ENCODE measurements at regions of chr1 and their contacts with region 1.

Region 1: GRCh38 chr1:174189428-174190062 is 30.2 kb downstream of the RABGAP1L start:
- DNase-seq: no peak
- H3K4me3 ChIP-seq: no peak overlapping the region
- H3K27ac ChIP-seq: no peak overlapping the region
- H3K4me1 ChIP-seq: peaks cover 0 to 3% (median 0%) of the 10 kb centered on the region in 4 donors
- H3K27me3 ChIP-seq: no peaks in the 10 kb centered on the region
- CTCF ChIP-seq: no peak

Region 2: GRCh38 chr1:174077749-174078490 is 111.6 kb before region 1 on chr1:
- intact Hi-C with region 1: no loop called
- DNase-seq: no peak
- H3K4me3 ChIP-seq: no peak overlapping the region
- H3K27ac ChIP-seq: no peak overlapping the region
- H3K4me1 ChIP-seq: no peaks in the 10 kb centered on the region
- H3K27me3 ChIP-seq: peaks cover 0 to 5% of the 10 kb centered on the region in 2 donors
- CTCF ChIP-seq: no peak

Region 3: GRCh38 chr1:174116042-174116441 is 73.5 kb before region 1 on chr1:
- intact Hi-C with region 1: no loop called
- DNase-seq: no peak
- H3K4me3 ChIP-seq: no peak overlapping the region
- H3K27ac ChIP-seq: no peak overlapping the region
- H3K4me1 ChIP-seq: peaks cover 0 to 8% (median 0%) of the 10 kb centered on the region in 4 donors
- H3K27me3 ChIP-seq: no peaks in the 10 kb centered on the region
- CTCF ChIP-seq: no peak

Region 4: GRCh38 chr1:174131021-174131638 is 58.4 kb before region 1 on chr1:
- intact Hi-C with region 1: loop called (anchors 2 kb)
- DNase-seq: no peak
- H3K4me3 ChIP-seq: no peak overlapping the region
- H3K27ac ChIP-seq: no peak overlapping the region
- H3K4me1 ChIP-seq: no peaks in the 10 kb centered on the region
- H3K27me3 ChIP-seq: no peaks in the 10 kb centered on the region
- CTCF ChIP-seq: no peak

Measured in tibial artery (tissue), 4 donors.